ENCODE measurements at regions of chr1 and their contacts with region 1.

Region 1: GRCh38 chr1:8097077-8097799 is 71.1 kb upstream of the ERRFI1 start:
- DNase-seq: peak; percentile 46
- H3K4me3 Mint-ChIP-seq: peak overlapping the region; percentile 41
- H3K27ac Mint-ChIP-seq: peak overlapping the region; percentile 90
- H3K4me1 Mint-ChIP-seq: peaks cover 39% of the 10 kb centered on the region
- H3K27me3 Mint-ChIP-seq: peaks cover 10% of the 10 kb centered on the region

Region 2: GRCh38 chr1:7942214-7942921 is 154.9 kb before region 1 on chr1:
- CTCF ChIA-PET with region 1: no interaction called
- POLR2A ChIA-PET with region 1: no interaction called
- intact Hi-C with region 1: loop called (anchors 10 kb)
- DNase-seq: peak; percentile 58
- H3K4me3 Mint-ChIP-seq: peak overlapping the region; percentile 44
- H3K27ac Mint-ChIP-seq: peak overlapping the region; percentile 80
- H3K4me1 Mint-ChIP-seq: peaks cover 46% of the 10 kb centered on the region
- H3K27me3 Mint-ChIP-seq: peaks cover 9% of the 10 kb centered on the region

Region 3: GRCh38 chr1:8047681-8048445 is 49.4 kb before region 1 on chr1:
- CTCF ChIA-PET with region 1: no interaction called
- POLR2A ChIA-PET with region 1: no interaction called
- intact Hi-C with region 1: loop called (anchors 5 kb)
- DNase-seq: no peak
- H3K4me3 Mint-ChIP-seq: no peak overlapping the region
- H3K27ac Mint-ChIP-seq: no peak overlapping the region
- H3K4me1 Mint-ChIP-seq: peaks cover 19% of the 10 kb centered on the region
- H3K27me3 Mint-ChIP-seq: peaks cover 4% of the 10 kb centered on the region

Region 4: DNA sequence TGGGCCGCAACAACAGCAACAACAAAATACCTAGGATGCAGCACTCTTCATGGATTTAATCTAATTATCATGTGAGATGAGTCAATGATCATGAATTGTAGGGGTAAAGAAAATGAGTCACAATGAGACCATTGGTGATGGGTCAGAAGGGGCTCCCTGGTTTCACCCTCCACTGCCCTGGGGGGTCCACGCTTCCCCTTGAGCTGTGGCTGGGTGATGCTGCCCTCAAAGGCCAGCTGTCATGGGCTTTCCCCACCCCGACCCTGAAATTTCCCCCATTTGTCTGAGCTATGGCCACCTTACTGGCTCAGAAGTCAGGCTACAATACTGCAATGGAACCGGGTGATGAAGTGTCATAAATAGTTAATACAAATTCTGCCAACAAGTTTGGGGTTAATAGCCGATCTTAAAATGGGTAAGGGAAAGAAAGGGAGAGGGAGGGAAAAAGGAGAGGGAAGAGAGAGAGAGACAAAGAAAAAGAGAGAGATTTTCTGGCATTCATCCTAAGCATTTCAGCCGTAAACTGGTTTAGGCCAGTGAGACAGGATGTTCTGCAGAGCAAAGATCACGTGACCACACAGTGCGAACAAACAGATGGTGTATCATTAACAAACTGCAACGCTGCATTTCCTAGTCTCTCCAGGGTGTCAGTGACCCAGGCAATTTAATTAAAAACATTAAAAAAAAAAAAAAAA is 72.3 kb after region 1 on chr1:
- CTCF ChIA-PET with region 1: no interaction called
- POLR2A ChIA-PET with region 1: no interaction called
- intact Hi-C with region 1: loop called (anchors 5 kb)
- DNase-seq: peak; percentile 66
- H3K4me3 Mint-ChIP-seq: peak overlapping the region; percentile 44
- H3K27ac Mint-ChIP-seq: peak overlapping the region; percentile 91
- H3K4me1 Mint-ChIP-seq: peaks cover 38% of the 10 kb centered on the region
- H3K27me3 Mint-ChIP-seq: no peaks in the 10 kb centered on the region

Region 5: GRCh38 chr1:8189931-8190483 is 92.8 kb after region 1 on chr1:
- CTCF ChIA-PET with region 1: no interaction called
- POLR2A ChIA-PET with region 1: no interaction called
- intact Hi-C with region 1: no loop called
- DNase-seq: no peak
- H3K4me3 Mint-ChIP-seq: no peak overlapping the region
- H3K27ac Mint-ChIP-seq: no peak overlapping the region
- H3K4me1 Mint-ChIP-seq: peaks cover 11% of the 10 kb centered on the region
- H3K27me3 Mint-ChIP-seq: no peaks in the 10 kb centered on the region

Region 6: GRCh38 chr1:8283058-8283884 is 186.0 kb after region 1 on chr1:
- CTCF ChIA-PET with region 1: no interaction called
- POLR2A ChIA-PET with region 1: no interaction called
- intact Hi-C with region 1: loop called (anchors 2 kb)
- DNase-seq: peak; percentile 64
- H3K4me3 Mint-ChIP-seq: peak overlapping the region; percentile 29
- H3K27ac Mint-ChIP-seq: peak overlapping the region; percentile 80
- H3K4me1 Mint-ChIP-seq: peaks cover 26% of the 10 kb centered on the region
- H3K27me3 Mint-ChIP-seq: peaks cover 36% of the 10 kb centered on the region